Psoas muscle (tissue), 8 donors: ENCODE measurements at regions of chr15 and their contacts with region 1.

Region 1: GRCh38 chr15:81265944-81266775 is 57.8 kb downstream of the STARD5 start:
- DNase-seq: peak; percentile 82 to 86
- ATAC-seq: peak; percentile 91 to 97 (median 94)
- H3K4me3 ChIP-seq: peak overlapping the region; percentile 12
- H3K27ac ChIP-seq: no peak overlapping the region
- H3K4me1 ChIP-seq: peaks cover 5% of the 10 kb centered on the region
- H3K27me3 ChIP-seq: peaks cover 0 to 6% (median 0%) of the 10 kb centered on the region in 3 donors
- CTCF ChIP-seq: peak; percentile 81

Region 2: DNA sequence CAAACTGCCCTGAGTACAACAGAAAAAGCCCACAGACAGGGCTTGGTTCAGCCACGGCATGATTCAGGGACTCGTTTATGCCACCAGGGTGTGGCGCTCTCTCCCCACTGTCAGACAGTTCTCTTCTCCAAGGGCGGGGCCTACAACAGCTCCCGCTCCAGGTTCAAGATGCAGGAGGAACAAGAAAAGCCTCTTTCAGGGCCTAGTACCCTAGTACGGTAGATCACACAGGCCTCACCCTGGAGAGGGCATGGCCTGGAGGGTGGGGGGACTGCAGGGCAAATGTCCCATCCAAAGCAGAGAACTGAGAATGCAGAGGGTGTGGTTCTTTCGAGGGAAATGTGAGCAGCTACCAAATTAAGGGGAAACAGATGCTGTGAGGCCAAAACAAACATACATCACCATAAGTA is 288.5 kb before region 1 on chr15:
- intact Hi-C with region 1: loop called (anchors 5 to 10 kb)
- DNase-seq: peak; percentile 69 to 74
- ATAC-seq: peak; percentile 42 to 74 (median 67)
- H3K4me3 ChIP-seq: no peak overlapping the region
- H3K27ac ChIP-seq: no peak overlapping the region
- H3K4me1 ChIP-seq: no peaks in the 10 kb centered on the region
- H3K27me3 ChIP-seq: no peaks in the 10 kb centered on the region
- CTCF ChIP-seq: peak; percentile 55

Region 3: GRCh38 chr15:80989518-80990478 is 276.4 kb before region 1 on chr15 and contains the start of gene MESD:
- intact Hi-C with region 1: loop called in 1 of 2 experiments (anchors 10 kb)
- DNase-seq: peak; percentile 98 to 99
- ATAC-seq: peak; percentile 99 to 100 (median 100)
- H3K4me3 ChIP-seq: peak within 1 kb of the TSS; percentile 94
- H3K27ac ChIP-seq: peak within 1 kb of the TSS; percentile 90
- H3K4me1 ChIP-seq: peaks cover 42% of the 10 kb centered on the region
- H3K27me3 ChIP-seq: no peaks in the 10 kb centered on the region
- CTCF ChIP-seq: no peak
- total RNA-seq, gene MESD: 5.3 to 9.4 (median 6.5) TPM

Region 4: GRCh38 chr15:81155375-81156218 is 110.6 kb before region 1 on chr15:
- intact Hi-C with region 1: loop called (anchors 2 to 5 kb)
- DNase-seq: peak in 1 of 2 donors; percentile 36
- ATAC-seq: peak in 3 of 4 donors; percentile 50 to 81 (median 59)
- H3K4me3 ChIP-seq: no peak overlapping the region
- H3K27ac ChIP-seq: no peak overlapping the region
- H3K4me1 ChIP-seq: no peaks in the 10 kb centered on the region
- H3K27me3 ChIP-seq: no peaks in the 10 kb centered on the region
- CTCF ChIP-seq: peak; percentile 55

Region 5: DNA sequence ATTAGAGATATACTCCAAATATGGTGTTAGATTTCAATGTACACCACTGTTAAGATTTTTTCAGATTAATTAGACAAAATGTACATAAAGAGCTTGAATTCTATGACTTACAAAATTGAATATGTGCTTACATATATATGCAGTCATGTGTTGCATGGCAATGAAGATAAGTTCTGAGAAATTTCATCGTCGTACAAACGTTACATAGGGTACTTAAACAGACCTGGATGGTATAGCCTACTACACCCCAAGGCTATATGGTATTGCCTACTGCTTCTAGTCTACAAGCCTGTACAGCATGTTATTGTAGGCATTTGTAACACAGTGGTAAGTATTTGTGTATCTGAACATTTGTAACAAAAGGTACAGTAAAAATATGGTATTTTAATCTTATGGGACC is 60.1 kb before region 1 on chr15:
- intact Hi-C with region 1: no loop called
- DNase-seq: no peak
- ATAC-seq: no peak
- H3K4me3 ChIP-seq: no peak overlapping the region
- H3K27ac ChIP-seq: no peak overlapping the region
- H3K4me1 ChIP-seq: no peaks in the 10 kb centered on the region
- H3K27me3 ChIP-seq: no peaks in the 10 kb centered on the region
- CTCF ChIP-seq: no peak